ENCODE measurements at regions of chr14 and their contacts with region 1.

Region 1: GRCh38 chr14:100662879-100663760 is 63.6 kb upstream of the DLK1 start:
- DNase-seq: peak; percentile 75 to 77
- ATAC-seq: peak in 1 of 2 experiments; percentile 80; a peak in 3 of 6 replicates
- H3K4me3 ChIP-seq: no peak overlapping the region
- H3K27ac ChIP-seq: peak overlapping the region in 1 of 2 experiments; percentile 25; a peak in 1 of 6 replicates
- H3K4me1 ChIP-seq: peaks cover 21% of the 10 kb centered on the region
- CTCF ChIP-seq: peak; percentile 93
- EP300 ChIP-seq: no peak
- POLR2A ChIP-seq: no peak
- RAD21 ChIP-seq: peak; percentile 80 to 87

Region 2: DNA sequence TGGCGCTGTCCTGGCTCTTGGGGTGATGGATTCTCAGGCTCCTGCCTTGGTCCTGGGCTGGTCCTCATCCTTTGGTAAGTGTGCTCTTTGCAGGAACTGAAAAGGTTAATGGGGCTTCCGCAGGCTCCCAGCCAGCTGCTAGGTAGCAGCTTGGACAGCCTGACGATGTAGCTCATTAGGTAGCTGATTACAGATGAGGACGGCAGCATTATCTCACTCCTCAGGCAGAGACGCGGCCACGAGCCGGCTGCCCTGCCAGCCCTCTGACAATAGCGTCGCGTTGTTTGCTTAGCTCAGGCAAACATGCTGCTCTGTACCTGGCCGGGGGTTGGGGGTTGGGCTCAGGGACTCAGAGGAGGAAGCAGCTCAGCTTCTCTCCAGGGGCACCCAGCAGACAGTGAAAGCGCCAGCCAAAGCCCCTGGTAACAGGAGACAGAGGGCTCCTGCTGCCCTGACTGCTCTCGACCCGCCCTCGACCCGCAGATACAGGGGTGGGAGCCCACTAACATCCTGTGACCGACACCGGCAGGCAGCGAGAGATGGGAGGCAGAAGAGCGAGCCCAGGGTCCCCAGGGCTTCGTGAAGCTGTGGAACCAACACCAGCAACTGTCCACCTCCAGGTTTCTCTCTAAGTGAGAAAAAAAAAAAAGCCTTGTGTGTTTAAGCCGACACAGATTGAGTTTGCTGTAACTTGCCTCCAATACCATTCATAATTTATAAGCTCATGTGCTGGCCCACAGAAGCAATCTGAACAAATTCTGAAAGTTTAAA is 10.1 kb after region 1 on chr14:
- CTCF ChIA-PET with region 1: interaction called, 17 read pairs
- POLR2A ChIA-PET with region 1: no interaction called
- DNase-seq: no peak
- ATAC-seq: no peak
- H3K4me3 ChIP-seq: no peak overlapping the region
- H3K27ac ChIP-seq: no peak overlapping the region
- H3K4me1 ChIP-seq: peaks cover 13% of the 10 kb centered on the region; the same call in 1 of the 3 replicates
- CTCF ChIP-seq: no peak
- EP300 ChIP-seq: no peak
- POLR2A ChIP-seq: no peak
- RAD21 ChIP-seq: no peak

Region 3: DNA sequence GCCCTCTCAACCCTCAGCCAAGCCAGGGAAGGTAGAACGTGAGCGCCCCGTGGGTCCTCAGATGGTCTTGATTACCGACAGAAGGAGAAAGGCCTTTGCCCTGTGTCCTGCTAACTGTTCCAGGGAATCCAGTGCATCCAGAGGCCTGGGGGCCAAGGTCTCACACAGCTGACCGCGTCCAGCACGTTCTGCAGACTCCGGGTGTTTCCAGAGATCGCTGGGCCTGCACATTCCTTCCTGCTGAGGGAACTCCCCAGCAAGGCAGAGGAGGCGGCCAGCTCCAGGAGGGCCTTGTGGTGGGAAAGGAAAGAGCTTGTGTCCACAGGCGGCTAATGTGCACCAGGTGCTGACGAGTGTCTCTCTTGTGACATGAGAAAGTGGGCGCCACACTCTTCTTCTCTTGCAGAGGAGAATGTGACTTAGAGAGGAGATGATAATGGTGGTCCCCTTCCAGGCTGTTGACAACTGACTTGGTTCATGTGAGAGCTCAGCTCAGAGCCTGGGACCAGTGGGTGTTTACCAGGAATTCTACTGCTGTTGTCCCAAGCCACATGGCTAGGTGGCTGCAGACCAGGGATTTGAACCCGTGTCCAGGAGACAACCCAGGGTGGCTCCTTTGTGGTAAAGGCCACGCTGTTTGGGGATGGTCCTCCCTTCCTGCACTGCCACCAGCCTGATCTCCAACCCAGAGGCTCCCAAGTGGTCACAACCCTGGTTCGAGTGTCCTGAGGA is 16.8 kb after region 1 on chr14:
- CTCF ChIA-PET with region 1: interaction called, 14 read pairs
- POLR2A ChIA-PET with region 1: no interaction called
- DNase-seq: no peak
- ATAC-seq: no peak
- H3K4me3 ChIP-seq: no peak overlapping the region
- H3K27ac ChIP-seq: no peak overlapping the region
- H3K4me1 ChIP-seq: peaks cover 7% of the 10 kb centered on the region; the same call in 1 of the 3 replicates
- CTCF ChIP-seq: no peak
- EP300 ChIP-seq: no peak
- POLR2A ChIP-seq: no peak
- RAD21 ChIP-seq: no peak

Region 4: DNA sequence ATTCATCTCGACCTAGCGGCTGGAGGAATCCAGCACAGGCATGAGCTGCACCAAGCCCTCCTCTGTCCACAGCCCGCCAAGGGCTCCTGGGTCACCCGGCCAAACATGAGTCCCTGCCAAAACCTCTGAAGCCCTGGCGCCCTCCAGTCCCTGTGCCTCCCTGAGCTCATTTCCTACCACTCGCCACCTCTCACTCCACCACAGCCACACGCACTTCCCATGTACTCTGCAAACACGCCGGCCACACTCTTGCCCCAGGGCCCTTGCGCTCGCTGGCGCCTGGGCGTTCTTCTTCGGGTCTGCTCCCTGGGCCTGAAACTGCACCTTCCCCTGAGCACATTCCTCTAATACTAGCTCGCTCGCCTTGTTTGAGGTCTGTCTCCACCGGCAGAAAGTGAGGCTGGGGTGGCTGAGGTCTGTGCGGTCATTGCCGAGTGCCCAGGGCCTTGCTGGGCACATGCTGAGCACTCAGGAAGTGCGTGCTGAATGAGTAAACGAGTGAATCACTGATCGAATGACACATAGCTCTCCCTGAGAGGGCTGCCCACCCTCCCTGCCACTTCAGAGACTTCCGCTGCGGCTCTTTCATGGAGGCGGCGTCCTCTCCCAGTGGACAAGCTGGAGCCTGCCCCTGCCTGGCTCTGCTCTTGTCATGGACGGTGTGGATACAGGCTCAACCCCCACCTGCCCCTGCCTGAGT is 29.9 kb after region 1 on chr14:
- CTCF ChIA-PET with region 1: interaction called, 11 read pairs
- POLR2A ChIA-PET with region 1: no interaction called
- DNase-seq: peak; percentile 85 to 93
- ATAC-seq: peak; percentile 92 to 96
- H3K4me3 ChIP-seq: peak overlapping the region; percentile 16; the same call in 2 of the 3 replicates
- H3K27ac ChIP-seq: peak overlapping the region; percentile 86 to 96
- H3K4me1 ChIP-seq: peaks cover 37% of the 10 kb centered on the region
- CTCF ChIP-seq: no peak
- EP300 ChIP-seq: no peak; a peak in 1 of 5 replicates
- POLR2A ChIP-seq: peak; percentile 63
- RAD21 ChIP-seq: no peak

Region 5: GRCh38 chr14:100900837-100901390 is 237.8 kb after region 1 on chr14:
- CTCF ChIA-PET with region 1: interaction called, 16 read pairs
- POLR2A ChIA-PET with region 1: no interaction called
- DNase-seq: peak; percentile 35 to 54
- ATAC-seq: peak; percentile 54 to 77; a peak in 3 of 6 replicates
- H3K4me3 ChIP-seq: no peak overlapping the region
- H3K27ac ChIP-seq: 0 out of 6 replicates have a peak overlapping the region, but pooled peaks of 1 of the 2 experiments have one; percentile 44
- H3K4me1 ChIP-seq: peaks cover 5% of the 10 kb centered on the region; the same call in 2 of the 3 replicates
- CTCF ChIP-seq: peak; percentile 54
- EP300 ChIP-seq: no peak
- POLR2A ChIP-seq: no peak
- RAD21 ChIP-seq: peak; percentile 77 to 78

Region 6: DNA sequence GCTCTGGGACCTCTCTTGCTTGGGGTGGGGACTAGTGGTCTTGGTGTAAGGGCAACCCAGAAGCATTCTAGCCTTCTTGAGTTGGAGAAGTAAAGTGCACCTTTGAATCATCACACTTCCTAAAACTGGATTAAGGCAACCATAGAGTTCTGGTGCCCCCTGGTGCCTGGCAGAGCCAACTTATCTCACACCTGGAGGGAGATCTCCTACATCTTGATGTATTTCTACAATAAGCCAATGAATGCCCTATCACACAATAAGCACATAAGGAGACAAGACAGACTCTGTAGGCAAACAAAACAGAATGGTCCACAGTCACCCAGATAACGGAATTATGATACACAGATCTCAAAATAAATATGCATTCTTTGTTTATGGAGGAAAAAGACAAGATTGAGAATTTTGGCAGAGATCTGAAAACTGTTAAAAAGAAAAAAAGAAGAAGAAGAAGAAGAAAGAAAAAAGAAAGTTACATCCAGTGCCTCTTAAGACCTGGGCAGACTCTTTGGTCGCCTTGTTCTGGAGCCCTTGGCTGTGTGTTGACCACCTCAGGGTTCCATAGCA is 1002.5 kb after region 1 on chr14:
- CTCF ChIA-PET with region 1: interaction called, 21 read pairs
- POLR2A ChIA-PET with region 1: no interaction called
- DNase-seq: peak; percentile 71 to 80
- ATAC-seq: peak; percentile 97
- H3K4me3 ChIP-seq: no peak overlapping the region
- H3K27ac ChIP-seq: no peak overlapping the region
- H3K4me1 ChIP-seq: no peaks in the 10 kb centered on the region
- CTCF ChIP-seq: peak; percentile 88
- EP300 ChIP-seq: no peak
- POLR2A ChIP-seq: no peak
- RAD21 ChIP-seq: peak; percentile 95 to 98